Naive thymus-derived CD8-positive, alpha-beta T cell (primary cell): ENCODE measurements at regions of chr16 and their contacts with region 1.

Region 1: GRCh38 chr16:89686520-89687091 is at the start of gene CDK10:
- DNase-seq: peak; percentile 80 to 98 (median 88)
- ATAC-seq: peak; percentile 90 to 93
- H3K4me3 Mint-ChIP-seq: peak within 1 kb of the TSS; percentile 86 to 96 (median 92)
- H3K27ac Mint-ChIP-seq: peak within 1 kb of the TSS; percentile 22 to 96 (median 92)
- H3K4me1 Mint-ChIP-seq: peaks cover 8 to 25% (median 15%) of the 10 kb centered on the region in 4 donors
- H3K27me3 Mint-ChIP-seq: no peaks in the 10 kb centered on the region
- polyA plus RNA-seq, gene CDK10: 25.4 to 63.3 (median 27.3) TPM

Region 2: DNA sequence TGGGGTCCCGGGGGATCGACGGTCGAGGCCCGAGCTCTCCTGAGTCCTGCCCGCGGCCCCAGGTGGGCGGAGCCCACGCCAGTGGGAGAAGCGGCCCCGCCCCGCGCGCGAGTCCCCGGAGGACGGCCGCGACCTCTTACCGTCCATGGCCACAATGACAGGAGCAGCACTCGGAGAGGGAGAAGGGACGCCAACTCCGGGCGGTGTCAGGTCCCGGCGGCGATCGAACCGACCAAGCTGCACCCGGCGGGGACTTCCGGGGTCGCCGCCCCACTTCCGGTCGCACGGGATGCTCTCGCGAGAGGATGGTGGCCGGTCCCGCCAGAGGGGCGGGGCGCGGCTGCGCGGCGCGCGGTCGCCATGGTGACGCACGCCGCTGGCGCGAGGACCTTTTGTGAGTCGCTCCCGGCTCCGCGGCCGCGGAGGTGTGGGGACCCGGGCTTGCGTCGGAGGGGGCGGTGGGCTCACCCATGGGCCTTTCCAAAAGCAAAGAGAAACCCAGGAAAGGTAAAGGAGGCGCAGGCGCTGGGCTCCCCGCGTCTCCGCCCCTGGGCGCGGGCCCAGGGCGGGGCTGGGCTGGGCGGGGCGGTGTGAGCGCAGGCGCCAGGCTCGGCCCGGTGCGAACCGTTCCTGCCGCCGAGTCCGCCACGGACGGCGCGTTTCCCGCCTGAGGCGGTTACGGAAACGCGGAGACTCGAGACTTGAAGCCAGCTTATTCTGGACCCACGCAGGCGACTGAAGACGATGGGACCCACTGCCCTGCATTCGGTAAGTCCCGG is 29.0 kb before region 1 on chr16 and contains the starts of genes CHMP1A and SPATA33:
- POLR2A ChIA-PET with region 1: interaction called, 12 read pairs
- DNase-seq: peak; percentile 88 to 98 (median 94)
- ATAC-seq: peak; percentile 91
- H3K4me3 Mint-ChIP-seq: peak within 1 kb of the TSS; percentile 79 to 88 (median 86)
- H3K27ac Mint-ChIP-seq: peak within 1 kb of the TSS; percentile 68 to 91 (median 86)
- H3K4me1 Mint-ChIP-seq: peaks cover 11 to 44% (median 31%) of the 10 kb centered on the region in 4 donors
- H3K27me3 Mint-ChIP-seq: no peaks in the 10 kb centered on the region
- polyA plus RNA-seq, gene CHMP1A: 48.9 to 58.3 (median 52.7) TPM
- polyA plus RNA-seq, gene SPATA33: 1.7 to 3.0 (median 2.3) TPM

Region 3: DNA sequence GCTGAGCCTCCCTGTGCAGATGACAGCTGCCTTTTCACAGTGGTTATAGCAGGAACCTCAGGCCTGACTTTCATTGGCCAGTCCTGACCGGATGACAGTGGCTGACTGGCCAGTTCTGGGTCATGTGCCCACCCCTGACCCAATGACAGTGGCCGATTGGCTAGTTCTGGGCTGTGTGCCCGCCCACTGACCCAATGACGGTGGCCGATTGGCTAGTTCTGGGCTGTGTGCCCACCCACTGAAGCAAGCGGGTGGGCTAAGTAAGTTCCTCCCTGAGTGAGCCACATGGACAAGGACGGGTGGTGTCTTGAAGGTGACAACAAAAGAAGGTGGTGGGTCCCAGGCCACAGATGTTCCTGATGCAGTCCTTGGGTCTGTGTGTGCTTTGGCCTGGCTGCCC is 271.5 kb after region 1 on chr16:
- POLR2A ChIA-PET with region 1: no interaction called
- DNase-seq: peak in 1 of 10 donors; percentile 38
- ATAC-seq: no peak
- H3K4me3 Mint-ChIP-seq: no peak overlapping the region
- H3K27ac Mint-ChIP-seq: no peak overlapping the region
- H3K4me1 Mint-ChIP-seq: peaks cover 0 to 31% (median under 1%) of the 10 kb centered on the region in 4 donors
- H3K27me3 Mint-ChIP-seq: no peaks in the 10 kb centered on the region